Caco-2 (cell line): ENCODE measurements at regions of chr14 and their contacts with region 1.

Region 1: GRCh38 chr14:58297762-58298476 is 436 bp upstream of the ARID4A start:
- DNase-seq: peak; percentile 98 to 99
- H3K4me3 ChIP-seq: peak overlapping the region; percentile 85
- H3K4me3 Mint-ChIP-seq: no peak overlapping the region
- H3K27ac Mint-ChIP-seq: no peak overlapping the region
- H3K4me1 ChIP-seq: peaks cover 7% of the 10 kb centered on the region; the same call in 1 of the 2 replicates
- H3K4me1 Mint-ChIP-seq: no peaks in the 10 kb centered on the region
- H3K27me3 ChIP-seq: no peaks in the 10 kb centered on the region
- H3K27me3 Mint-ChIP-seq: no peaks in the 10 kb centered on the region
- CTCF ChIP-seq: no peak

Region 2: DNA sequence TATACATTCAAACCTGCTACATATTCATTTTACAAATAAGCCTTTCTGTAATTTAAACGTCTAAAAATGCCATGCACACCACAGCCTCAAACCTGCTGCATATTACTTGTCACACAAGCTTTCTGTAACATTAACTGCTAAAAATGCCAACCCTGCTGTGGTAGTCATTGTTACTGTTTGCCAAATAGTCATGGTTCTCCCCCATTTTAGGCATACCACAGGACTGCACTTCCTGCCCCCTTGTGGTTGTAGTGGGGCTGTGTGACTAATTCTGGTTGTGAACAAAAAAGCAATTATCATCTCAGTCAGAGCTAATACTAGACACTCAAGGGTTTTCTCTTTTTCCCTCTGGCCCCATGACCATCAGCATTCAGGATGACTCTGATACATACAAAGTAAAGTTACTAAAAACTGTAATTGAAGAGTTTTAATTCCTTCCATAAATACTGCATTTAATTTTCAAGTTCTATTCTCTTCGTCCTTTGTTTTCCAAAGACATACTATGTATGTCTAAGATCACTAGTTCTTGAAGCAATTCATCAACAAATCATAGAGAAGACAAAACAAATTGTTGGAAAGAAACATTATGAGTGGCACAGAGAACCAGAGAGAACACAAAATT is 426.3 kb before region 1 on chr14:
- CTCF ChIA-PET with region 1: no interaction called
- POLR2A ChIA-PET with region 1: no interaction called
- intact Hi-C with region 1: no loop called
- DNase-seq: peak in 1 of 2 experiments; percentile 37
- H3K4me3 ChIP-seq: no peak overlapping the region
- H3K4me3 Mint-ChIP-seq: no peak overlapping the region
- H3K27ac Mint-ChIP-seq: no peak overlapping the region
- H3K4me1 ChIP-seq: no peaks in the 10 kb centered on the region
- H3K4me1 Mint-ChIP-seq: peaks cover 7% of the 10 kb centered on the region
- H3K27me3 ChIP-seq: no peaks in the 10 kb centered on the region
- H3K27me3 Mint-ChIP-seq: peaks cover 11% of the 10 kb centered on the region
- CTCF ChIP-seq: peak; percentile 44 to 62

Region 3: DNA sequence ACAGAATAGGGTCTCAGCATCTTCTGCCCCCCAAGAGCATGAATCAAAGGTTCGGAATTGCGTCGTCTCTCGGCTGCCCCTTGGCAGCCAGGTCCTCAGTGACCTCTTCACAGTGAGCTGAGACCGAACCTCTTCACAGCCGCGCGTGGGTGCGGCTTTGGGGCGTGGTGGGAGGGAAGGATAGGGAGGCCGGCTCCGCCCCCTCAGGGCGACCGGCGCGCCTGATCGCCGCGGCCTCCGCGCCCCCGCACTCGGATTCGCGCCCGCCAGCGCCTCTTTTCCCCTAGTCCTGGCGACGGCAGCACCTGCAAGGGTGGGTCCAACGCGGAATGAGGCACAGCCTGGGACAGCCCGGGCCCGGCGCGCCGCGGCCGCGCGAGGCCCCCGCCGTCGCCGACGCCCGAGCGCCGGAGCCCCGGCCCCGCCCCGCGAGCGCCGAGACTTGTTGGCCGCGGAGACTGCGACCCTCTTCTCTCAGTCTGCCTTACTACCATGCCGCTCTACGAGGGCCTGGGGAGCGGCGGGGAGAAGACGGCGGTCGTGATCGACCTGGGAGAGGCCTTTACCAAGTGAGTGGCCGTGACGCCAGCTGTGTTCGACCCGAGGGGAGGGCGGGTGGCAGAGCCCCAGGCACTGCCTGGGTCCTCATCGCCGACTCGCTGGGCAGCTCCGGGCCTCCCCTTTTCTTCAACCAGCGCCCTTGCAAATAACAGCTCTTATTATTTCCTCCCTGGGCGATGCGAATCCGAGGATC is 98.0 kb before region 1 on chr14 and contains the start of gene ACTR10:
- CTCF ChIA-PET with region 1: no interaction called
- POLR2A ChIA-PET with region 1: interaction called, 5 read pairs
- intact Hi-C with region 1: loop called (anchors 1 kb)
- DNase-seq: peak; percentile 92 to 93
- H3K4me3 ChIP-seq: peak within 1 kb of the TSS; percentile 96
- H3K4me3 Mint-ChIP-seq: peak within 1 kb of the TSS; percentile 89
- H3K27ac Mint-ChIP-seq: peak within 1 kb of the TSS; percentile 90
- H3K4me1 ChIP-seq: no peaks in the 10 kb centered on the region
- H3K4me1 Mint-ChIP-seq: peaks cover 12% of the 10 kb centered on the region
- H3K27me3 ChIP-seq: no peaks in the 10 kb centered on the region
- H3K27me3 Mint-ChIP-seq: no peaks in the 10 kb centered on the region
- CTCF ChIP-seq: no peak
- total RNA-seq, gene ACTR10: 49.0 and 50.1 TPM in 2 replicates

Region 4: DNA sequence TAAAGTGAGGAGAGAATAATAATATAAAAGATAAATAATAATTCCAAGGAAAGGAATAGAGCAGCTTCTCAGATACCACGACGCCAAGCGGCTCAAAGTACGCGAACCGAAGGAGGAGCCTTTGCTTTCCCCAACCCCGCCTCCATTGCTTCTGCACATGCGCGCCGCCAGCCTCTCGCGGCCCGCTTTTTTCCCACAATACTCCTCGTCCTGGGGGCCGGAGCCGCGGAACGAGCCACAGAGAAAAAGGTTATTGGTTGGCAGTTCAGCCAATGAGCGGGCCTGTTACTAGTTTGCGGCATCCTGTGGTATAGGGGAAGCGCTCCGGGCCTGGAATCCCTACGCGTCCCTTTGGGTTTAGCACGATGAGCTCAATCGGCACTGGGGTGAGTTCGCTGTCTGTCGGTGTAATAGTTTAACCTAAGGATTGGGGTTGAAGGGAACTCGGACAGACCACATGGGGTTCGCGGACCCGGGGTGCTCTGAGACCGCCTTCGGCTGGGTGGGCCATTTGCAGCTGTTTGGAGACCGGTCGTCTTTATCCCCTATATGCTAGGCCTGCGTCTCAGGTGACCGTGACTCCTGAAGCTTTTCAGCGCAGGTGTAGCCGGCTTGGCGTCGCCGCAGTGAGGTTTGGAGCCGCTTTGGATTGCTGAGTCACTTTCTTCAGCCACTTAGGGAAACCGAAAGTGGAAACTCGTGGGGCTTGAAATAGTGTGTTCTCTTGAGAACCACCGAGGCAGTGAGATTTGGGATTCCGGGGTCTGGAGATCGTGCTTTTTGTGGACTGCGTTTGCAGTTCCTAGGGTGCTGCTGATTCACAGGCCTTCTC is 53.1 kb before region 1 on chr14 and contains the start of gene PSMA3:
- CTCF ChIA-PET with region 1: interaction called, 7 read pairs
- POLR2A ChIA-PET with region 1: interaction called, 27 read pairs
- intact Hi-C with region 1: loop called (anchors 1 kb)
- DNase-seq: peak; percentile 97 to 98
- H3K4me3 ChIP-seq: peak within 1 kb of the TSS; percentile 96
- H3K4me3 Mint-ChIP-seq: peak within 1 kb of the TSS; percentile 96
- H3K27ac Mint-ChIP-seq: peak within 1 kb of the TSS; percentile 99
- H3K4me1 ChIP-seq: peaks cover 21% of the 10 kb centered on the region; the same call in 1 of the 2 replicates
- H3K4me1 Mint-ChIP-seq: peaks cover 9% of the 10 kb centered on the region
- H3K27me3 ChIP-seq: no peaks in the 10 kb centered on the region
- H3K27me3 Mint-ChIP-seq: no peaks in the 10 kb centered on the region
- CTCF ChIP-seq: no peak
- total RNA-seq, gene PSMA3: 334 and 352 TPM in 2 replicates

Region 5: DNA sequence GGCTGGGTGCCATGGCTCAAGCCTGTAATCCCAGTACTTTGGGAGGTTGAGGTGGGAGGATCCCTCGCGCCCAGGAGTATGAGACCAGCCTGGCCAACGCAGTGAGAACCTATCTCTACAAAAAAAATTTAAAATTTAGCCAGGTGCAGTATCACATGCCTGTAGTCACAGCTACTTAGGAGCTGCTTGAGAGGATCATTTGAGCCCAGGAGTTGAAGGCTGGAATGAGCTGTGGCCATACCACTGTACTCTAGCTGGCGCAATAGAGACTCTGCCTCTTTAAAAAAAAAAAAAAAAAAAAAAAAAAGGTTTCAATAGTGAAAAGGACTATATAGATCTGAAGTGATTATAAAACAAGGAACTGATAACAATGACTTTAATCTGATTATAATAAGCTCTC is 39.8 kb before region 1 on chr14:
- CTCF ChIA-PET with region 1: interaction called, 10 read pairs
- POLR2A ChIA-PET with region 1: no interaction called
- intact Hi-C with region 1: loop called (anchors 5 kb)
- DNase-seq: no peak
- H3K4me3 ChIP-seq: no peak overlapping the region
- H3K4me3 Mint-ChIP-seq: no peak overlapping the region
- H3K27ac Mint-ChIP-seq: no peak overlapping the region
- H3K4me1 ChIP-seq: no peaks in the 10 kb centered on the region
- H3K4me1 Mint-ChIP-seq: no peaks in the 10 kb centered on the region
- H3K27me3 ChIP-seq: no peaks in the 10 kb centered on the region
- H3K27me3 Mint-ChIP-seq: no peaks in the 10 kb centered on the region
- CTCF ChIP-seq: peak in 1 of 2 experiments; percentile 12

Region 6: DNA sequence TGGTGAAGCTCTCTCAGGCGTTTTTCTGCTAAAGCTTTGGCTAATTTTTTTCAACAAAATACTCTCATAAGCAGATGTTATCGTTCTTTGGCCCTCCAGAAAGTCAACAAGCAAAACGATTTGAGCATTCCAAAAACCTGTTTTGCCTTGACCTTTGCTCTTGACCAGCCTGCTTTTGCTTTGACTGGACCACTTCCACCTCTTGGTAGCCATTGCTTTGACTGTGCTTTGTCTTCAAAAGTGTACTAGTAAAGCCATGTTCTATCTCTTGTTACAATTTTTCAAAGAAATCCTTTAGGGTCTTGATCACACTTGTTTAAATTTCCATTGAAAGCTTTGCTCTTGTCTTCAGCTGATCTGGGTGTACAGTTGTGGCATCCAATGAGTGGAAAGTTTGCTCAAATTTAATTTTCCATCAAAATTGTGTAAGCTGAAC is 10.3 kb before region 1 on chr14:
- CTCF ChIA-PET with region 1: interaction called, 7 read pairs
- POLR2A ChIA-PET with region 1: interaction called, 9 read pairs
- intact Hi-C with region 1: loop called (anchors 1 kb)
- DNase-seq: peak; percentile 75 to 81
- H3K4me3 ChIP-seq: no peak overlapping the region
- H3K4me3 Mint-ChIP-seq: peak overlapping the region; percentile 67
- H3K27ac Mint-ChIP-seq: peak overlapping the region; percentile 21
- H3K4me1 ChIP-seq: peaks cover 36% of the 10 kb centered on the region
- H3K4me1 Mint-ChIP-seq: peaks cover 48% of the 10 kb centered on the region
- H3K27me3 ChIP-seq: no peaks in the 10 kb centered on the region
- H3K27me3 Mint-ChIP-seq: no peaks in the 10 kb centered on the region
- CTCF ChIP-seq: no peak

Region 7: DNA sequence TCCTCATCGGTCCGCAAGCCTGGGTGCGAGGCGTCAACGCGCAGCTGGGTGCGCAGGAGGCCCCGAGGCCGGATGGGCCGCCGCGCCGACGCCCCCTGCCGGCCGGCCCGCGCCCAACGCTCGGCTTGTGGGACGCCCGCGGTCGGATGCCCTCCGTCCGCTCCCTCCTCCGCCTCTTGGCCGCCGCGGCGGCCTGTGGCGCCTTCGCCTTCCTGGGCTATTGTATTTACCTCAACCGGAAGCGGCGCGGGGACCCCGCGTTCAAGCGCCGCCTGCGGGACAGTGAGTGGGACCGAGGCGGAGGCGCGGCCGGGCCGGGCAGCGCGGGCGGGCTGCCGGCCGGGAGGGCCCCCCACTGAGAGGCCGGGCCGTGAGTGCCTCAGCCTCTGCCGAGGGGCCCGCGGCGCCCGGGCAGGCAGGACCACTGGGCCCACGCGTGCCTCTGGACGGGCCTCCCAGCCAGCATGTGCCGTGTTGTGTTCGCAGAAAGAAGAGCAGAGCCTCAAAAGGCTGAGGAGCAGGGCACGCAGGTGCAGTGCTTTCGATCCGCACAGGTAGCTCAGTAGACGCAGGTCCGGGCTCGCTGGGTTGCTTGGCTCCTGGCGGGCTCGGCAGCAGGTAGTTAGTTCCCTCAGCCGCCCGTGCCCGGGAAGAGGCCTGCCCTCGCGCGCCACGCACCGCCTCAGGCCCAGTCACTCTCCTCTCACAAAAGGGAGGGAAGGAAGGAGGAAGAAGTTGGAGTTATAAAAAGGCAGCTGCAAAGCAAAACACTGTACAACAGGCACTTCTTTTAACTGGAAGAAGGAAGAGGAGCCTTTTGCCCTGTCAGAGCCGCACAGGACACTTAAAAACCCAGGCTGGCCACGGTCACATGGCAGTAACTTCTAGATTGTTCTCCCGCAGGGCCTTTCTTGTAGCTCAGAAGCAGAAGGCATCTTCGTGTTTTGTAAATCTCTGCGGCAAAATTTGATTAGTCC is 98.2 kb after region 1 on chr14 and contains the start of gene TOMM20L:
- CTCF ChIA-PET with region 1: interaction called, 12 read pairs
- POLR2A ChIA-PET with region 1: interaction called, 15 read pairs
- intact Hi-C with region 1: loop called (anchors 1 kb)
- DNase-seq: peak; percentile 85 to 92
- H3K4me3 ChIP-seq: peak within 1 kb of the TSS; percentile 47
- H3K4me3 Mint-ChIP-seq: peak within 1 kb of the TSS; percentile 84
- H3K27ac Mint-ChIP-seq: peak within 1 kb of the TSS; percentile 96
- H3K4me1 ChIP-seq: peaks cover 17% of the 10 kb centered on the region
- H3K4me1 Mint-ChIP-seq: peaks cover 15% of the 10 kb centered on the region
- H3K27me3 ChIP-seq: no peaks in the 10 kb centered on the region
- H3K27me3 Mint-ChIP-seq: no peaks in the 10 kb centered on the region
- CTCF ChIP-seq: peak; percentile 32 to 84
- total RNA-seq, gene TOMM20L: 1.2 and 1.7 TPM in 2 replicates